ENCODE measurements at regions of chr11 and their contacts with region 1.

Region 1: GRCh38 chr11:119095066-119095880 is 6.4 kb downstream of the DPAGT1 start:
- DNase-seq: peak; percentile 96 to 100 (median 100)
- ATAC-seq: peak; percentile 93
- H3K4me3 ChIP-seq: peak overlapping the region; percentile 94
- H3K4me3 Mint-ChIP-seq: peak overlapping the region; percentile 90 to 97 (median 93)
- H3K27ac ChIP-seq: peak overlapping the region; percentile 75
- H3K27ac Mint-ChIP-seq: peak overlapping the region; percentile 82 to 96 (median 88)
- H3K4me1 ChIP-seq: peaks cover 11 to 23% of the 10 kb centered on the region in 2 donors
- H3K4me1 Mint-ChIP-seq: peaks cover 20 to 67% (median 37%) of the 10 kb centered on the region in 7 donors
- H3K27me3 ChIP-seq: no peaks in the 10 kb centered on the region
- H3K27me3 Mint-ChIP-seq: peaks cover 0 to 3% (median 0%) of the 10 kb centered on the region in 5 donors

Region 2: GRCh38 chr11:118572061-118572980 is 523.0 kb before region 1 on chr11 and contains the start of gene ARCN1:
- CTCF ChIA-PET with region 1: no interaction called
- POLR2A ChIA-PET with region 1: no interaction called
- intact Hi-C with region 1: loop called in 1 of 2 experiments (anchors 1 kb)
- DNase-seq: peak; percentile 58 to 82 (median 79)
- ATAC-seq: peak; percentile 94
- H3K4me3 ChIP-seq: peak within 1 kb of the TSS; percentile 98
- H3K4me3 Mint-ChIP-seq: peak within 1 kb of the TSS; percentile 83 to 99 (median 96)
- H3K27ac ChIP-seq: peak within 1 kb of the TSS; percentile 100
- H3K27ac Mint-ChIP-seq: peak within 1 kb of the TSS; percentile 92 to 98 (median 98)
- H3K4me1 ChIP-seq: peaks cover 26 to 36% of the 10 kb centered on the region in 2 donors
- H3K4me1 Mint-ChIP-seq: peaks cover 35 to 58% (median 50%) of the 10 kb centered on the region in 7 donors
- H3K27me3 ChIP-seq: no peaks in the 10 kb centered on the region
- H3K27me3 Mint-ChIP-seq: no peaks in the 10 kb centered on the region
- total RNA-seq, gene ARCN1: 71.2 to 134 (median 115) TPM

Region 3: GRCh38 chr11:119030329-119031049 is 64.8 kb before region 1 on chr11 and contains the start of gene SLC37A4:
- CTCF ChIA-PET with region 1: interaction called, 4 read pairs
- POLR2A ChIA-PET with region 1: interaction called, 5 read pairs
- intact Hi-C with region 1: loop called in 1 of 2 experiments (anchors 1 kb)
- DNase-seq: peak; percentile 96 to 100 (median 98)
- ATAC-seq: peak; percentile 97
- H3K4me3 ChIP-seq: peak within 1 kb of the TSS; percentile 91
- H3K4me3 Mint-ChIP-seq: peak within 1 kb of the TSS; percentile 62 to 93 (median 82)
- H3K27ac ChIP-seq: peak within 1 kb of the TSS; percentile 79
- H3K27ac Mint-ChIP-seq: peak within 1 kb of the TSS; percentile 59 to 93 (median 81)
- H3K4me1 ChIP-seq: peaks cover 0 to 10% of the 10 kb centered on the region in 2 donors
- H3K4me1 Mint-ChIP-seq: peaks cover 12 to 24% (median 17%) of the 10 kb centered on the region in 7 donors
- H3K27me3 ChIP-seq: no peaks in the 10 kb centered on the region
- H3K27me3 Mint-ChIP-seq: no peaks in the 10 kb centered on the region
- total RNA-seq, gene SLC37A4: 7.1 to 20.8 (median 14.6) TPM

Region 4: DNA sequence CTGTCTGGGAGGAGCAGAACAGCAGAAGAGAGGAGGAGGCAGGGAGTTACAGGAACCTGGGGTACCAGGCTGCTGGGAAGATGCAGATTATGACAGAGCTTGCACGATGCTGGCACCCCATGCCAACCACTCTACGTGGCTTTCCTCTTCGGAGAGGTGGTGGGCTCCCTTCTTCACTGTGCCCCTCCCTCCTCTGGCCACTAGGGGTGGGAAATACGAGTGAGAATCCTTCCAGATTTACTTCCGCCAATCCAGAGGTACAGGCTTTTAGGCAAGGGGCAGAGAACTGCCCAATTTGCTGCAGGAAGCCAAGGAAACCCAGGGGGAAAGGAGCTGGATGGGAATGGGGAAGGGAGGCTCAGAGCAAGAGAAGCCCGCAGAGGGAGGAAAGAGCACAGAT is 50.6 kb before region 1 on chr11:
- CTCF ChIA-PET with region 1: no interaction called
- POLR2A ChIA-PET with region 1: no interaction called
- intact Hi-C with region 1: no loop called
- DNase-seq: no peak
- ATAC-seq: no peak
- H3K4me3 ChIP-seq: no peak overlapping the region
- H3K4me3 Mint-ChIP-seq: no peak overlapping the region
- H3K27ac ChIP-seq: no peak overlapping the region
- H3K27ac Mint-ChIP-seq: peak overlapping the region in 1 of 9 donors; percentile 45
- H3K4me1 ChIP-seq: no peaks in the 10 kb centered on the region
- H3K4me1 Mint-ChIP-seq: peaks cover 0 to 5% (median 0%) of the 10 kb centered on the region in 7 donors
- H3K27me3 ChIP-seq: no peaks in the 10 kb centered on the region
- H3K27me3 Mint-ChIP-seq: no peaks in the 10 kb centered on the region

Region 5: DNA sequence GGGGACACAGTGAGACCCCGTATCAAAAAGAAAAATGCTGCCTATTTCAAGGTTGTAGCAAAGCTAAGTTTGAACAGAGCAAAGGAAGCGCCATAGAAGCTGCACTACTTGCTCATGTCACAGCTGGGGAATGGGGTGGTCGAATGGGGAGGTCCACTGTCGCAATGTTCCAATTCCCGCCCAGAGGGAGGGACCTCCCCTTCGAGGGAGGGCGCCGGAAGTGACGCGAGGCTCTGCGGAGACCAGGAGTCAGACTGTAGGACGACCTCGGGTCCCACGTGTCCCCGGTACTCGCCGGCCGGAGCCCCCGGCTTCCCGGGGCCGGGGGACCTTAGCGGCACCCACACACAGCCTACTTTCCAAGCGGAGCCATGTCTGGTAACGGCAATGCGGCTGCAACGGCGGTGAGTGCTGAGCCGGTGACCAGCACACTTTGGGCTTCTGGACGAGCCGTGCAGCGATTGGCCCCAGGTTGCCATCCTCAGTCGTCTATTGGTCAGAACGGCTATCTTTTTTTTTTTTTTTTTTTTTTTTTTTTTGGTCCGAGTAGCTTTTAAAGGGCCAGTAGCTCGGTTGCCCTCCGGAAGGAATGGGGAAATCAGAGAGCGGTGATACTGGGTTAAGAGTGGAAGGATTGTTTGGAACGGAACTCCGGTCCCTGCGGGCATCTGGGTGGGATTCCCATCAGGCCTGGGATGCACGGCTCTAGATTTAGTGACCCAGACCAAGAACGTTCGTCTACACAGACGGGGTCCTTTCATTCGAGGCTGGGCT is 10.4 kb before region 1 on chr11 and contains the start of gene HMBS:
- CTCF ChIA-PET with region 1: interaction called, 6 read pairs
- POLR2A ChIA-PET with region 1: interaction called, 49 read pairs
- intact Hi-C with region 1: loop called (anchors 1 kb)
- DNase-seq: peak; percentile 83 to 93 (median 87)
- ATAC-seq: peak; percentile 97
- H3K4me3 ChIP-seq: peak within 1 kb of the TSS; percentile 81
- H3K4me3 Mint-ChIP-seq: peak within 1 kb of the TSS; percentile 85 to 98 (median 94)
- H3K27ac ChIP-seq: peak within 1 kb of the TSS; percentile 81
- H3K27ac Mint-ChIP-seq: peak within 1 kb of the TSS; percentile 87 to 97 (median 93)
- H3K4me1 ChIP-seq: peaks cover 8 to 9% of the 10 kb centered on the region in 2 donors
- H3K4me1 Mint-ChIP-seq: peaks cover 7 to 39% (median 17%) of the 10 kb centered on the region in 7 donors
- H3K27me3 ChIP-seq: no peaks in the 10 kb centered on the region
- H3K27me3 Mint-ChIP-seq: no peaks in the 10 kb centered on the region
- total RNA-seq, gene HMBS: 6.7 to 25.4 (median 7.7) TPM

Region 6: DNA sequence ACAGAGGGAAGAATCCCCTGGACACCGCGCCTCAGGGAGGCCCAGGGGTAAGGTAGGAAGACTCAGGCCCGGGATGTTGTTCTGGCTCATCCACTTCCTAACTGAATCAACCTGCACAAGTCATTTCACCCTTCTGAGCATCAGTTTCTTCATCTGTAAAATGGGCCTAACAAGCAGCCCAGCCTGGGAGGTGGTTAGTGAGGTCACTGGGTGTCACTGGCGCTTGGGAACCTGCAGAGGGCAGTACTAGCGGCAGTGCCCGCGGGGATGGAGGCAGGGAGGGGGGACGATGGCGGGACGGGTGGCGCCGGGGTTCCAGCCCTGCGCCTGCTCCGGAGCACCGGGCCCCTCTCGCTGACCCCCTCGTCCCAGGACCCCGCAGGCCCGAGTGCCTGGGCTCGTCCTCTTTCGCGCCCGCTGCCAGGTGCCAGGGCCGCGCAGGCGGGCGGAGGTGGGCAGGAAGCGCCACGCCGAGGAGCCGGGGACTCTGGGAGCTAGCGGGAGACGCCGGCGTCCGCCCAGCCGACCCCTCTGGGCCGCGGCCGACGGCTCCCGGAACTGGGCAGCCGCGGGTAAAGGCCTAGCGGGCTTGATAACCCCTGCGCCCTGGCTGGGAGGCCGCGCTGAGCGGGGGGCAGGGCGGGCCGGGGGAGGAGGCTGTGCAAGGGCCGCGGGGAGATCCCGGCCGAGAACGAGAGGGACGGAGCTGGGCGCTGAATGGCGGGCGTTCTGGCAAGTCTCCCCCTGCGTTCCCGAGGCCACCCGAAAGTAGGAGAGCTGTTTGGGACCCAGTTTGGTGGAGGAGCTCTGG is 73.4 kb after region 1 on chr11 and contains the start of gene NLRX1:
- CTCF ChIA-PET with region 1: no interaction called
- POLR2A ChIA-PET with region 1: interaction called, 6 read pairs
- intact Hi-C with region 1: loop called in 1 of 2 experiments (anchors 1 kb)
- DNase-seq: peak; percentile 67 to 85 (median 82)
- ATAC-seq: peak; percentile 98
- H3K4me3 ChIP-seq: peak within 1 kb of the TSS; percentile 75
- H3K4me3 Mint-ChIP-seq: peak within 1 kb of the TSS; percentile 86 to 94 (median 90)
- H3K27ac ChIP-seq: peak within 1 kb of the TSS; percentile 73
- H3K27ac Mint-ChIP-seq: peak within 1 kb of the TSS; percentile 64 to 95 (median 87)
- H3K4me1 ChIP-seq: peaks cover 0 to 4% of the 10 kb centered on the region in 2 donors
- H3K4me1 Mint-ChIP-seq: peaks cover 4 to 25% (median 11%) of the 10 kb centered on the region in 7 donors
- H3K27me3 ChIP-seq: no peaks in the 10 kb centered on the region
- H3K27me3 Mint-ChIP-seq: no peaks in the 10 kb centered on the region
- total RNA-seq, gene NLRX1: 8.3 to 19.5 (median 9.8) TPM

Region 7: DNA sequence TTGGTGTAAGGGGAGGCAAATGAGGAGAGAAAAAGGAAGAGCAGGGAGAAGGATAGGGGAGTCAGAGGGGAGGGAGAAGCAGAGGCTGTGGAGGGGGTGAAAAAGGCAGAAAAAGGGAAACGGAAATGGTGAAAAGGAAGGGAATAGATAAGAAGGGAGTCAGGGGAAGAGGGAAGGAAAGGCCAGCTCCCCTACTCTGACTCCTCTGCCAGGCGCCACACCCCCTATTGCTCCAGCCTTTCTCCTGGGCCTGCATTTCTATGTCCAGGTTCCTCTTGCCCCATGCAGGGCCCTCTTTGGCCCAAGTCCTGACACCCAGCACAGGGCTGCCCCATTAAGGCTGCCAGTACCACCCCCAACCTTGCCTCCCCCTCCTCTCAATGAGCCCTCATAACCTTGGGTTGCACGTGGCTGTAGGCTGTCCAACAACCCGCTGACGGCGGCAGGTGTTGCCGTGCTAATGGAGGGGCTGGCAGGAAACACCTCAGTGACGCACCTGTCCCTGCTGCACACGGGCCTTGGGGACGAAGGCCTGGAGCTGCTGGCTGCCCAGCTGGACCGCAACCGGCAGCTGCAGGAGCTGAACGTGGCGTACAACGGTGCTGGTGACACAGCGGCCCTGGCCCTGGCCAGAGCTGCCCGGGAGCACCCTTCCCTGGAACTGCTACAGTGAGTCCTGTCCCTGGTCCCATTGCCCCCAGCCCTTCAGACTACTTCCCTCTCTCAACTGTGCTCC is 86.6 kb after region 1 on chr11:
- CTCF ChIA-PET with region 1: no interaction called
- POLR2A ChIA-PET with region 1: no interaction called
- intact Hi-C with region 1: no loop called
- DNase-seq: no peak
- ATAC-seq: no peak
- H3K4me3 ChIP-seq: no peak overlapping the region
- H3K4me3 Mint-ChIP-seq: no peak overlapping the region
- H3K27ac ChIP-seq: no peak overlapping the region
- H3K27ac Mint-ChIP-seq: peak overlapping the region in 3 of 9 donors; percentile 13 to 70 (median 38)
- H3K4me1 ChIP-seq: peaks cover 0 to 14% of the 10 kb centered on the region in 2 donors
- H3K4me1 Mint-ChIP-seq: peaks cover 9 to 18% (median 13%) of the 10 kb centered on the region in 7 donors
- H3K27me3 ChIP-seq: no peaks in the 10 kb centered on the region
- H3K27me3 Mint-ChIP-seq: no peaks in the 10 kb centered on the region

Region 8: DNA sequence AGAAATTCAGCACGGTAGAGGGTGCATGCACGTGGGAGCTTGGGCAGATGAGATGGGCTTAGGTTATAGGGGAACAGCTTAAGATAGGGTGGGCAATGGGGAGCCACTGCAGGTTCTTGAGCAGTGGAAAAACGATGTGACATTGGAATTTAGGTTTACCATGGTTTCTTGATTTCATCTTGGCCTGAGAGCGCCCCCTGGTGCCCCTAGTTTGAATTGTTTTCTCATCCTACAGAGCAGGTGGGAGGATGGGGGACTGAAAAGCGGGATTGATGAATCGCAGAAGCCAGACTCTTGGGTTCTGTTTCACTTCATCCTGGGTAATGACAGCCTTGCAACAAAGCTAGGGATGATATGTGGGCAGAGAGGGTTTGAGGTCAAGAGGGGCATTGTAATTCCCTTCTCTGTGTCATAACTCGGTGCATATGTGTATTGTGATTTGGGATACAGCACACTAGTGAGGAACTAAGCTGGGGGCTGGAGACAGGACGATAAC is 228.3 kb after region 1 on chr11:
- CTCF ChIA-PET with region 1: no interaction called
- POLR2A ChIA-PET with region 1: interaction called, 3 read pairs
- intact Hi-C with region 1: loop called in 1 of 2 experiments (anchors 1 kb)
- DNase-seq: peak; percentile 61 to 82 (median 77)
- ATAC-seq: peak; percentile 50
- H3K4me3 ChIP-seq: no peak overlapping the region
- H3K4me3 Mint-ChIP-seq: peak overlapping the region in 4 of 10 donors; percentile 10 to 54 (median 44)
- H3K27ac ChIP-seq: no peak overlapping the region
- H3K27ac Mint-ChIP-seq: peak overlapping the region in 2 of 9 donors; percentile 15 to 57
- H3K4me1 ChIP-seq: no peaks in the 10 kb centered on the region
- H3K4me1 Mint-ChIP-seq: peaks cover 11 to 33% (median 26%) of the 10 kb centered on the region in 7 donors
- H3K27me3 ChIP-seq: no peaks in the 10 kb centered on the region
- H3K27me3 Mint-ChIP-seq: peaks cover 0 to 17% (median 11%) of the 10 kb centered on the region in 5 donors

Region 9: DNA sequence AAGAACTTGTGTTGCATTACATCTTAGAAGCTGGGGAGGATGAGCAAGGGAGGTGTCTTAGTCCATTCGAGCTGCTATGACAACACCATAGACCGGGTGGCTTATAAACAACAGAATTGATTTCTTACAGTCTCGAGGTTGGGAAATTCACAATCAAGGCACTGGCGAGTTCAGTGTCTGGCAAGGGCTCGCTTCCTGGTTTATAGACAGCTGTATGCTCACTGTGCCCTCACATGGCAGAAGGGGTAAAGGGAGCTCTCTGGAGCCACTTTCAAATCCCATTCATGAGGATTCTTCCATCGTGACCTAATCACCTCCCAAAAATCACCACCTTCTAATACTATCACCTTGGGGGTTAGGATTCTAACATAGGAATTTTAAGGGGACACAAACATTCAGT is 783.7 kb after region 1 on chr11:
- CTCF ChIA-PET with region 1: no interaction called
- POLR2A ChIA-PET with region 1: no interaction called
- intact Hi-C with region 1: no loop called
- DNase-seq: no peak
- ATAC-seq: no peak
- H3K4me3 ChIP-seq: no peak overlapping the region
- H3K4me3 Mint-ChIP-seq: no peak overlapping the region
- H3K27ac ChIP-seq: no peak overlapping the region
- H3K27ac Mint-ChIP-seq: no peak overlapping the region
- H3K4me1 ChIP-seq: no peaks in the 10 kb centered on the region
- H3K4me1 Mint-ChIP-seq: no peaks in the 10 kb centered on the region
- H3K27me3 ChIP-seq: no peaks in the 10 kb centered on the region
- H3K27me3 Mint-ChIP-seq: peaks cover 4 to 19% (median 11%) of the 10 kb centered on the region in 5 donors

Measured in naive thymus-derived CD4-positive, alpha-beta T cell (primary cell).